GM18951 (cell line): ENCODE measurements at regions of chr16 and their contacts with region 1.

Region 1: DNA sequence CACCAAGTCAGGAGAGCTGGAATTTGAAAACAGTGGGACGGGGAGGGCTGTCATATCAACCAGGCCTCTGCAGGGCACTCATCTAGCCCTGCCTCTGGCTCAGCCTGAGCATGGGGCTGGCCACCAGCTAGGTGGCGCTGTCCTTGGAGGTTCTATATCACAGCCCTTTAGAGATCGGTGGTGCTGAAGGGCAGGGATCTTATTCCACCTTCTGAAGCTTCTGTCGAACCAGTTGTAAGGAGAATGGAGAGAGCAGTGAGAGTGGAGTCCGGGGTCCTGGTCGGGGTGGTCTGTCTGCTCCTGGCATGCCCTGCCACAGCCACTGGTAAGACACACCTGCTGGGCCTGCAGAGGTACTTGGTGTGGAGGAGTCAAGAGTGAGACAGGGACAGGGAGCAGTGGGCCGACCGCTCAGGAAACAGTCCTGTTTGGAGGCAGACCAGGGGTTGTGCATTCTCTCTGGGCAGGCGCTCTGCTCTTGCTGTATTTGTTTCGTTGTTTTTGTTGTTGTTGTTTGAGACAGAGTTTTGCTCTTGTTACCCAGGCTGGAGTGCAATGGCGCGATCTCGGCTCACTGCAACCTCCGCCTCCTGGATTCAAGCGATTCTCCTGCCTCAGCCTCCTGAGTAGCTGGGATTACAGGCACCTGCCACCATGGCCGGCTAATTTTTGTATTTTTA is at the start of gene CES3:
- POLR2A ChIP-seq: no peak

Region 2: DNA sequence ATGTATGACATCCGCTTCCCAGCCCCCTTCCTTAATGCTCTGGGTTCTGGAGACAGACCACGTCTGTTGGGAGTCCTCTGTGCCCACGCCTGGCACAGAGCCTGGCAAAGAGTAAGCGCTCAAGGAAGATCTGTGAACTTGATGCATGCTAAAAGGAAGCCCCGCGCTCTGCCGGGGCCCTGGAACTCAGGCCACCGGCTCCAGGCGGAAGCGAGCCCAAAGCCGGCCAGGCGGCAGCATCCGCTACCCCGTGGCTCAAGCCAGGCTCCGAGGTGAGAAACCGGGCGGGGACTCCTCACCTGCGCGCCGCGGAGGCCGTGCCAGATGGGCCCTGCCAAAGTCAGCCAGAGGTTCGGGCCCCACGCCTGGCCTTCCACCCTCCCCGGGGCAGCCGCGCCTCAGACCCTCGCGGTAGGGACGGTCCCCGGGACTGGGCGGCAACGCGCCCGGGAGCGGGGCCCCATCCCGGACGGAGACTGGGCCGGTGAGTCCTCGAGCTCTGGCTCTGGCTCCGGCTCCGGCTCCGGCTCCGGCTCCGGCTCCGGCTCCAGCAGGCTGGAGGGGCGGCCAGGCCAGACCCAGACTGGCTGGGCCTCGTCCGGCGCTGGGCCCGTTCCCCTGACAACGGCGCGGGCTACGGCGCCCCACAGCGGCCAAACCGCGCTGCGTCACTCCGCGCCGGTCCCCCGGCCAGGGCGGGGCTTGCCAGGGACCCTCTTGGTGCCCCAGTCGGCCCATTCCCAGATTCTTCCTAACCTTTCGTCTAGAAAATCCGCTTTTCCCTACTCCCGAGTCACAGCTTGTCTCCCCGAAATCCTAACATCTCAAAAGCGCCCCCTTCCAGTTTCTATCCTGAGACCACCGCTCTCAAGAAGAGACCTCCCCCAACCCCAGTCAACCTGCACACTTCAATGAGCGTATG is 454.9 kb after region 1 on chr16 and contains the start of gene ZDHHC1:
- in situ Hi-C with region 1: loop called (anchors 25 kb)
- POLR2A ChIP-seq: no peak